ENCODE measurements at regions of chr5 and their contacts with region 1.

Region 1: DNA sequence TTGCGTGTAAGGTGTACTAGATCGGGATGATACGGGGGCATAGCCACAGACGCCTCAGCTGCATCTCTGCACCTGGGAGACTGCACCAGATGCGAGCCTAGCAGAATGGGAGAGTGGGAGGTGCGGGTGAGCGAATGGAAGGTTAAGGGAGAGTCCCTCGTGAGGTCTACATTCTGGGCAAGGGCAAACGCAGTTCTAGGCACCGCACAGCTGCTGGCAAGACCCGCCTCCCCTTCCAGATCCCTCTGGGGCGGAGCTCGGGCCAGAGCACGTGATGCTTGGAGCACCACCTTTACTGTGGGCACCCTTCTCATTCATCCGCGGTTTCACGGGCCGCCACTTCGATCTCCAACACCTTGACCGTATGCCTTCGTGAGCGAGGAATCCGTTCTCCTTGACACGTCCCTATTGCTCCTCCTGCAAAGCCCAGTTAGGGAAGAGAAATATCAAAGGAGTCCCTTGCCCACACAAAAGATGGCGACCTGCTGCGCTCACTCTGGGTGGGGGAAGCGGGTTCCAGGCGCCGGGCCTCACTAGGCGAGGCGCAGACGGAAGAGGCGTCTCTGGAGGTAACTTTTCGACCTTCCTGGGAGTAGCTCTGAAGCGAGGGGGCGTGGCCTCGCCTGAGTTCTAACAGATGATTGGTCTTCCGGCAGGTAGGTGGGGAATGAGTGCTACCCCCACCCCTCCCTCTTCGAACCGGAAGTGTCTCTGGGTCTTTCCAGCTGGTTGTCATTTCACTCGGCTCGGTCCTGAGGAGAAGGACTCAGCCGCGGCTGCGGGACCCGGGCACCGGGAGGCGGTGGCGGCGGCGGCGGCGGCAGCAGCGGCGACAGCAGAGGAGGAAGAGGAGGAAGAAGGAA is at the start of gene CPEB4:
- DNase-seq: peak; percentile 99
- ATAC-seq: peak; percentile 97 to 98
- H3K4me3 ChIP-seq: peak within 1 kb of the TSS; percentile 83
- H3K27ac ChIP-seq: peak within 1 kb of the TSS; percentile 93 to 98
- H3K4me1 ChIP-seq: peaks cover 20% of the 10 kb centered on the region
- CTCF ChIP-seq: no peak
- EP300 ChIP-seq: no peak
- POLR2A ChIP-seq: peak; percentile 69
- RAD21 ChIP-seq: no peak; a peak in 1 of 5 replicates
- polyA plus RNA-seq, gene CPEB4: 49.1 and 50.0 TPM in 2 replicates

Region 2: DNA sequence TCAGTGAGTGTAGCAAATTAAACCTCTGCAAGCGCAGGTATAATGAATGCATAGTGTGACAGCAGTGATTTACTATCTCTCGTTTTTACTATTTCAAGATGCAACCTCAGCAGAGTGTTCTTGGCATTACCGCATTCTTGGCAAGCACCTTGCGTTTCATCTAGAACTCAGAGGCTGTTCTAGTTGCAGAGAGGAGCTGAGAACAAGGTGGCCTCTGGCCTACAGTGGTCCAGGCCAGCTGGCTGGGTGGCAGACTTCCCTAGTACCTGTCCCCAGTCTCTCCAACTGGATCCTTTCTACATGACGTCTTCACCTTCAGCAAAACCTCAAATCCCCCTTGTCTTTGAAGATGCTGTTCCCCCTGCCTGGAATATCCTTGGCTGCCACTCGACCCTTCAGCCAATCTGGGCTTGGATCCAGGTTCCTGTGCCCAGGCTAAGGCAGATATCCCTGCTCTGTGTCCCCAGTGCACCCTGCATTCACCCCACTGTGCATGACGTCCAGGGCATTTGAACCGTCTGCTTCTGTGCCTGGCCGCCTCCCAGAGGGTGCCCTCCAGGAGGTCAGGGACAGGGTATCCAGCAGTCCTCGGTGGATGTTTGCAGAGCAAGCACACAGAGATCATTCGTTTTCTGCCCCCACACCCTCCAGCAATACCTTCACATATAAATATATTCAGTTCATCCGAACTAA is 120.1 kb before region 1 on chr5:
- CTCF ChIA-PET with region 1: interaction called, 5 read pairs
- POLR2A ChIA-PET with region 1: interaction called, 24 read pairs
- DNase-seq: peak in 1 of 2 experiments; percentile 35
- ATAC-seq: no peak
- H3K4me3 ChIP-seq: no peak overlapping the region
- H3K27ac ChIP-seq: peak overlapping the region; percentile 92 to 93
- H3K4me1 ChIP-seq: peaks cover 61% of the 10 kb centered on the region
- CTCF ChIP-seq: no peak
- EP300 ChIP-seq: no peak
- POLR2A ChIP-seq: no peak
- RAD21 ChIP-seq: no peak

Region 3: DNA sequence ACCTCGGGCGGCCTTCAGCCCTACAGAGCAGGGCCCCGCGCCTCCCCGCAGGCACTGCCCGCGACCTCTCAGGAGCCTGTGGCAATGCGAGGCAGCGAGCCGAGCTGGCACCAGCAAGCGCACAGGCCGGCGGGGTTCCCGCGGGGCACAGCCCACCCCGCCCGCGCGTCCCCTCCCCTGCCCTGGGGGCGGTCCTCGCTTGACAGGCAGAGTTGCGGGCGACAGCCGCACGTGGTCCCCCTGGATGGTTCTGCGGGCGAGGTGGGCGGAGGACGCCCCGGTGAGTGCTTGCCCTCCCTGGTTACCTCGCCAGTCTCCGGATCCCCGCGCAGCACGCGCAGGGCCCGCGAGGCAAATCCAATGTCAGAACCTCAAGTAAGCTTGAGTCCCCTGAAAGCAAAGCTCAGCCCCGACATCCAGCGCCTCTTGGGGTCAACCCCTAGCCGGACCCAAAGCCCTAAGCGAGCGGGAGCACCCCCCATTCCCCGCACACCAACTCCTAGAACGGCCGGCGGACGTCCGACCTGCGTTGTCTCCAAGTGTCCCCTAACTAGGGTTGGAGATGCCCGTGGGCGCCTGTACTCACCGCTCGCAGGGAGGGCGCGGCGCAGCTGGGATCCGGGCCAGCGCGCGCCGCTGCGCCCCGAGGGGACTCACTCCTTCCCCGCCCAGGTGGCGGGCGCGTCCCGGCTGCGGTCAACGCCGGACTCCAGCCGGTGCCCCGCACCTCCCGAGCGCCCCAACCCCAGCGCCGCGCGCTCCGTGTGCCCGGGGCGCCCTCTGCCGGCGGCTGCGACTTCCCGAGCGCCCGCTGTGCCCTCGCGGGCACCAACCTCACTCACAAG is 1556.4 kb after region 1 on chr5 and contains the start of gene DRD1:
- CTCF ChIA-PET with region 1: no interaction called
- POLR2A ChIA-PET with region 1: no interaction called
- DNase-seq: peak; percentile 50 to 70
- ATAC-seq: peak; percentile 90 to 97
- H3K4me3 ChIP-seq: peak within 1 kb of the TSS; percentile 51
- H3K27ac ChIP-seq: peak within 1 kb of the TSS; percentile 72 to 87
- H3K4me1 ChIP-seq: peaks cover 16% of the 10 kb centered on the region; the same call in 1 of the 3 replicates
- CTCF ChIP-seq: peak; percentile 95
- EP300 ChIP-seq: no peak
- POLR2A ChIP-seq: no peak
- RAD21 ChIP-seq: peak; percentile 84 to 99
- polyA plus RNA-seq, gene DRD1: 5.7 and 6.6 TPM in 2 replicates

Measured in A549 (cell line).